ENCODE measurements at regions of chr3 and their contacts with region 1.

Region 1: GRCh38 chr3:155386919-155387318 is 93.4 kb upstream of the STRIT1 start:
- DNase-seq: no peak
- H3K4me3 ChIP-seq: no peak overlapping the region
- CTCF ChIP-seq: no peak
- POLR2A ChIP-seq: no peak

Region 2: DNA sequence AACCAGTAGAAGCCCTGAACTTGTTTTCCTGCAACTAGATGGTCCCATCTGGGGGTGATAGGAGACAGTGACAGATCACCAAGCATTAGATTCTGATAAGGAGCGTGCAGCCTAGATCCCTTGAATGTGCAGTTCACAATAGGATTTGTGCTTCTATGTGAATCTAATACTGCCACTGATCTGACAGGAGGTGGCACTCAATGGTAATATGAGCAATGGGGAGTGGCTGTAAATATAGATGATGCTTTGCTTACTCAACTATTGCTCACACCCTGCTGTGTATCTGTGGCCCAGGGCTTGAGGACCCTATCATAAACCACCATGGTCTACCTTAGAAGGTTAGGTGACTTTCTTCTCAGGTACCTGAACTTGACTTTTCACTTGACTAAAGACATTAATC is 1682.8 kb before region 1 on chr3:
- intact Hi-C with region 1: no loop called
- DNase-seq: no peak
- H3K4me3 ChIP-seq: no peak overlapping the region
- CTCF ChIP-seq: no peak
- POLR2A ChIP-seq: no peak

Region 3: GRCh38 chr3:156093964-156094363 is 707.0 kb after region 1 on chr3:
- intact Hi-C with region 1: loop called (anchors 5 kb)
- DNase-seq: no peak
- H3K4me3 ChIP-seq: no peak overlapping the region
- CTCF ChIP-seq: no peak
- POLR2A ChIP-seq: no peak